Activated T-helper 1 cell treated with anti-CD3 and anti-CD28 coated beads, Interleukin-12 subunit alpha, Interleukin-12 subunit beta, Interleukin-2, Interleukin-4 antibody, amounts not matched to agents 30 ng/mL and 10 ng/mL and 1 ng/mL, durations not matched to agents 14 hours and 24 hours and 36 hours (primary cell): ENCODE measurements at regions of chr5 and their contacts with region 1.

Region 1: GRCh38 chr5:157219491-157220271 is 39.0 kb downstream of the ITK start:
- DNase-seq: peak; percentile 43
- H3K4me3 Mint-ChIP-seq: peak overlapping the region; percentile 41
- H3K27ac Mint-ChIP-seq: peak overlapping the region; percentile 93
- H3K4me1 Mint-ChIP-seq: peaks cover 81% of the 10 kb centered on the region
- H3K27me3 Mint-ChIP-seq: no peaks in the 10 kb centered on the region

Region 2: GRCh38 chr5:156402387-156402921 is 817.2 kb before region 1 on chr5:
- intact Hi-C with region 1: loop called (anchors 5 kb)
- DNase-seq: peak; percentile 59
- H3K4me3 Mint-ChIP-seq: peak overlapping the region; percentile 53
- H3K27ac Mint-ChIP-seq: peak overlapping the region; percentile 79
- H3K4me1 Mint-ChIP-seq: peaks cover 18% of the 10 kb centered on the region
- H3K27me3 Mint-ChIP-seq: peaks cover 7% of the 10 kb centered on the region

Region 3: GRCh38 chr5:157069949-157070348 is 149.7 kb before region 1 on chr5:
- intact Hi-C with region 1: no loop called
- DNase-seq: no peak
- H3K4me3 Mint-ChIP-seq: no peak overlapping the region
- H3K27ac Mint-ChIP-seq: no peak overlapping the region
- H3K4me1 Mint-ChIP-seq: peaks cover 41% of the 10 kb centered on the region
- H3K27me3 Mint-ChIP-seq: no peaks in the 10 kb centered on the region

Region 4: DNA sequence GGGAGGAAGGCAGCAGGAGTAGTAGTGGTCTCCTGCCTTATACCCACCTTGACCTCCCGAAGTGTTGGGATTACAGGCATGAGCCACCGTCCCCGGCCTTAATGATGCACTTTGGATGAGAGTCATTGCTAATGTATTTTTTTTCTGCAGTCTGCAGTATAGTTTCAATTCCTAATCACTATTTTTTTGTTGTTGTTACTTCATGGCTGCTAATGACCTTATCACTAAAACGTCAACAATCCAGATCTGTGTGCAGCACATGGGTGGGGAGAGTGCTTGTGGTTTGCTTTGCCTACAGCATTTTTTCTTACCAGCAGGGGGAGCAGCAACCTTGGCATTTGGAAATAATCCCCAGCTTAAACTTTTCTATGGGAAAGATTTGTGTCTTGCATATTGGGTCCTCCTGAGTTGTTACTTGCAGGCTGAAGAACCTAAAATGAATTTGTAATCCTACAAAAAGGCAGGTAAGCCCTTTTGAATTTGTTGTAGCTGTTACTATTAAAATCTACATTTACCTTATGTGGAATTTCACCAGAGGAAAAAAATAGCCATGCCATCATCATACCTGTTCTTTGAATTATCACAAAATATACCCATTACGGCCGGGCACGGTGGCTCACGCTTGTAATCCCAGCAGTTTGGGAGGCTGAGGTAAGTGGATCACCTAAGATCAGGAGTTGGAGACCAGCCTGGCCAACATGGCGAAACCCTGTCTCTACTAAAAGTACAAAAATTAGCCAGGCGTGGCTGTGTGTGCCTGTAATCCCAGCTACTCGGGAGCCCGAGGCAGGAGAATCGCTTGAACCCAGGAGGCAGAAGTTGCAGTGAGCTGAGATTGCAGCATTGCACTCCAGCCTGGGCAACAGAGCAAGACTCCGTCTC is 70.7 kb before region 1 on chr5:
- intact Hi-C with region 1: loop called (anchors 1 kb)
- DNase-seq: peak; percentile 74
- H3K4me3 Mint-ChIP-seq: no peak overlapping the region
- H3K27ac Mint-ChIP-seq: peak overlapping the region; percentile 67
- H3K4me1 Mint-ChIP-seq: peaks cover 43% of the 10 kb centered on the region
- H3K27me3 Mint-ChIP-seq: no peaks in the 10 kb centered on the region

Region 5: DNA sequence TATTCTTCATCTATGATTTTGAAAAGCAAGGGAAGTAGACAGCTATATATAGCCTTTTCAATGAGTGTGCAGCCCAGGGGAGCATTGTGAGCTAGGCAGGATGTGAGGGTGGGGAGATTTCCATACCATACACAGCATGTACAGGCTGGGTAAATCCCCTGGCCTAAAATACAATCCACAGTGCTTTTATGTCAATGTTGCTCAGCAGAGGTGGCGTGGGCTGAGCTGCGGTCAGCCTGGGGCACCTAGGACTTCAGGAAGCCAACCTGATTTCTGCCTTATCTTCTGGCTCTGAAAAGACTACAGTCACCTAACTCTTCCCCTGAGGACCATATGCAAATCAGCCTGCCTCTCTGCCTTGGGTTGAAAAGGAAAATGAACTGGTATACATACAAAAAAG is 47.3 kb before region 1 on chr5:
- intact Hi-C with region 1: loop called (anchors 1 kb)
- DNase-seq: peak; percentile 84
- H3K4me3 Mint-ChIP-seq: peak overlapping the region; percentile 68
- H3K27ac Mint-ChIP-seq: peak overlapping the region; percentile 91
- H3K4me1 Mint-ChIP-seq: peaks cover 78% of the 10 kb centered on the region
- H3K27me3 Mint-ChIP-seq: no peaks in the 10 kb centered on the region

Region 6: GRCh38 chr5:157198277-157198986 is 21.2 kb before region 1 on chr5:
- intact Hi-C with region 1: loop called (anchors 1 kb)
- DNase-seq: no peak
- H3K4me3 Mint-ChIP-seq: peak overlapping the region; percentile 68
- H3K27ac Mint-ChIP-seq: peak overlapping the region; percentile 94
- H3K4me1 Mint-ChIP-seq: peaks cover 94% of the 10 kb centered on the region
- H3K27me3 Mint-ChIP-seq: no peaks in the 10 kb centered on the region

Region 7: DNA sequence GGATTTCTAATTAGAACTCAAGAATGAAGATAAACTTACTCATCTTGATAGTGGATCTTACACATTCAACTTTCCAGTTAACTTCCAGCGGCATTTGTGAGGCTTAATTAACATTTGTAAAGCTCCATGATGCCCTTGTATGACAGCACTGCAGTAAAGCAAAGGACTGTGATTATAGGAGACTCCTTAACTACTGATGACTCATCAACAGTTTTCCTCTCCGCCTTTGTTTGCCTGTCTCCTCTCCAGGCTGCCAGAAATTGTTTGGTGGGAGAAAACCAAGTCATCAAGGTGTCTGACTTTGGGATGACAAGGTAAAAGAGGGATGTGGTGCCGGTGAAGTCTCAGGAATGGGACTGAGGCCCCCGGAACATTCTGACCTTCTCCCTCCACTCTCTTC is 25.8 kb after region 1 on chr5:
- intact Hi-C with region 1: loop called (anchors 1 kb)
- DNase-seq: no peak
- H3K4me3 Mint-ChIP-seq: no peak overlapping the region
- H3K27ac Mint-ChIP-seq: peak overlapping the region; percentile 78
- H3K4me1 Mint-ChIP-seq: peaks cover 79% of the 10 kb centered on the region
- H3K27me3 Mint-ChIP-seq: no peaks in the 10 kb centered on the region

Region 8: DNA sequence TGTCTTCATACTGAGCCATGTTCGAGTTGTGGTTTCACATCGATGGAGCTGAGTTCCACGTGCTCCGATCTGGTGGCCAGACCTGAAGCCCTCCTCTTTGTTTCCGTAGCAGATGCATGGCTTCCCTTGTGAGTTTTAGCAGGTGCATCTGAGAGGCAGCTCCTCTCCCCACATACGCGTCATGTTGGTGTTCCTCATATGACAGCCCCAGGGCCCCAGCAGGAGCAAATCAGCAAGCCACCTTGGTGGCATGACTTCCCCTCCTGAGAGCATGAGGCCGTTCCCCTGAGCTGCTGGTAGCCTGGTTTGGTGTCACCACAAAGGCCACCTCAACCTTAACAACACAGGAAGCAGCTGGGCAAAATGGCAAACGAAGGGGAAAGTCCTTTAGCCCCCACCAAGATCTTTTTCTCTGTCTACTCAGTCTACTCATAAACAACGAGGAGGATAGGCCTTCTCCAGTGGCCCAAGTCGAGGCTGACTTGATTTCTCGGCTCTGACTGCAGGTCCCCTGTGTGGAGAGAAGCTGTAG is 52.1 kb after region 1 on chr5:
- intact Hi-C with region 1: loop called (anchors 1 kb)
- DNase-seq: peak; percentile 85
- H3K4me3 Mint-ChIP-seq: peak overlapping the region; percentile 74
- H3K27ac Mint-ChIP-seq: peak overlapping the region; percentile 100
- H3K4me1 Mint-ChIP-seq: peaks cover 96% of the 10 kb centered on the region
- H3K27me3 Mint-ChIP-seq: no peaks in the 10 kb centered on the region